H1 (cell line): ENCODE measurements at regions of chr16 and their contacts with region 1.

Region 1: DNA sequence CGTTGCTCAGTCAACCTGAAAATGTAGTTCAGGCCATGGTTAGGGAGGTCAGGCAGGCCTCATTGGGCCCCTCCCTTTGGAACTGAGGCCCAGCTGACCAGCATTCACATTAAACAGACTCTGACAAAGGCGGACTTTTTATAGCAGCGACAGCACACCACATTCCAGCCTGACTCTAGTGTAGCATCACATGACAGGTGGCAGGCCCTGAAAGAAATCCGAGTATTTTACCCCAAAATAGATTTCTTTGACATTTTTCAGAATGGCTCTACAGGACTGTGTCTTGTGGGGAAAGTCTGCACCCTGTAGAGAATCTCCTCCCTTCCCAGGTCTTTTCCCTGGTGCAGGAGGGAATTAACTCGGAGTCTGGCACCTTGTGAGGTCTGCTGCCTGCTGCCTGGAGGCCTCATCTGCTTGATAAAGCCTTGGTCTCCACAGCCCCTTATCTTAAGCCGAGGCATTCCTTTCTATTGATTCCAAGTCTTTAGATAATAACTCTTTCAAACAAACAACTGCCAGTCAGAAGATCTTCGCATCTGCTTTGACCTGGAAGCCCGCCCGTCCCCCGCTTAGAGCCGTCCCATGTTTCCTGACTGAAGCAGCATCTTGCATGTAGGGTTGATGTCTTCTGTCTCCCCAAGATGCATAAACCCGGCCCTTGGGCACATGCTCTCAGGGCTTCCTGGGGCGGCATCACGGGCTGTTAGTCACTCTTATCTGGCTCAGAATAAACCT is 44.0 kb upstream of the CAPN15 start:
- DNase-seq: no peak
- H3K4me3 ChIP-seq: no peak overlapping the region
- H3K27ac ChIP-seq: peak overlapping the region; percentile 66
- H3K4me1 ChIP-seq: peaks cover 10 to 16% (median 12%) of the 10 kb centered on the region in 4 experiments
- H3K27me3 ChIP-seq: no peaks in the 10 kb centered on the region
- CTCF ChIP-seq: no peak
- EP300 ChIP-seq: no peak
- POLR2A ChIP-seq: no peak
- RAD21 ChIP-seq: no peak

Region 2: GRCh38 chr16:391885-392335 is 91.6 kb before region 1 on chr16:
- CTCF ChIA-PET with region 1: interaction called, 37 read pairs
- POLR2A ChIA-PET with region 1: interaction called, 4 read pairs
- DNase-seq: peak; percentile 83 to 97
- H3K4me3 ChIP-seq: no peak overlapping the region
- H3K27ac ChIP-seq: no peak overlapping the region
- H3K4me1 ChIP-seq: peaks cover 0 to 7% (median 2%) of the 10 kb centered on the region in 4 experiments; a peak in 3 of 7 replicates
- H3K27me3 ChIP-seq: no peaks in the 10 kb centered on the region
- CTCF ChIP-seq: peak; percentile 94 to 100 (median 99)
- EP300 ChIP-seq: no peak
- POLR2A ChIP-seq: no peak
- RAD21 ChIP-seq: peak; percentile 99

Region 3: GRCh38 chr16:401468-402348 is 81.8 kb before region 1 on chr16 and contains the start of gene DECR2:
- CTCF ChIA-PET with region 1: interaction called, 11 read pairs
- POLR2A ChIA-PET with region 1: interaction called, 3 read pairs
- DNase-seq: peak; percentile 68 to 98
- H3K4me3 ChIP-seq: peak within 1 kb of the TSS; percentile 61 to 71 (median 68)
- H3K27ac ChIP-seq: peak within 1 kb of the TSS; percentile 63; the same call in 1 of the 2 replicates
- H3K4me1 ChIP-seq: peaks cover 0 to 20% (median 11%) of the 10 kb centered on the region in 4 experiments; a peak in 6 of 7 replicates
- H3K27me3 ChIP-seq: no peaks in the 10 kb centered on the region
- CTCF ChIP-seq: peak; percentile 9 to 25 (median 12); a peak in 3 of 4 replicates
- EP300 ChIP-seq: no peak
- POLR2A ChIP-seq: peak; percentile 69 to 87
- RAD21 ChIP-seq: peak; percentile 24 to 28; a peak in 3 of 4 replicates
- total RNA-seq, gene DECR2: 28.2 and 30.6 TPM in 2 replicates

Region 4: GRCh38 chr16:424033-424622 is 59.4 kb before region 1 on chr16:
- CTCF ChIA-PET with region 1: interaction called, 12 read pairs
- POLR2A ChIA-PET with region 1: interaction called, 3 read pairs
- DNase-seq: no peak
- H3K4me3 ChIP-seq: peak overlapping the region in 1 of 4 experiments; percentile 74; a peak in 2 of 8 replicates
- H3K27ac ChIP-seq: no peak overlapping the region
- H3K4me1 ChIP-seq: peaks cover 0 to 15% (median 7%) of the 10 kb centered on the region in 4 experiments; a peak in 4 of 7 replicates
- H3K27me3 ChIP-seq: peaks cover 11 to 33% (median 24%) of the 10 kb centered on the region in 4 experiments
- CTCF ChIP-seq: no peak
- EP300 ChIP-seq: no peak
- POLR2A ChIP-seq: no peak
- RAD21 ChIP-seq: no peak

Region 5: DNA sequence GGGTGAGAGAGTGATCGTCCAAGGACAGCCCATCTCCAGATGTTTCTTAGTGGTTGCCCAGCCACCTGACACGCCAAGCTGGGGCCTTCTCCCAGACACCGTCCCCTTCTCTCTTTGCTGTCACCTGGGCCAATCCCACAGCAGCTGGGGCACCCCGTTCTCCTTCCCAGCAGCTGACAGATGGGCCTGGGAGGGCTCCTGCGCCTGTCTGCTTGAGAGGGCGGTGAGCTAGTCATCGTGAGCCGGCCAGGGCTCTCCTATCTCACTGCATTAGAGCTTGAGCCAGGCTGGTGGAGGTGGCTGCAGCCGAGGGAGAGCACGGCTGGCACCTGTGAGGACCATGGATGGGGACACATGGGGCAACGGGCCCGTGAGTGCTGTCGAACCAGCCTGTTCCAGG is 16.9 kb before region 1 on chr16:
- CTCF ChIA-PET with region 1: interaction called, 13 read pairs
- POLR2A ChIA-PET with region 1: no interaction called
- DNase-seq: no peak
- H3K4me3 ChIP-seq: no peak overlapping the region
- H3K27ac ChIP-seq: no peak overlapping the region
- H3K4me1 ChIP-seq: peaks cover 3 to 11% (median 7%) of the 10 kb centered on the region in 4 experiments
- H3K27me3 ChIP-seq: no peaks in the 10 kb centered on the region
- CTCF ChIP-seq: no peak
- EP300 ChIP-seq: no peak
- POLR2A ChIP-seq: no peak
- RAD21 ChIP-seq: no peak

Region 6: GRCh38 chr16:495127-495748 is 11.7 kb after region 1 on chr16:
- CTCF ChIA-PET with region 1: interaction called, 19 read pairs
- POLR2A ChIA-PET with region 1: interaction called, 4 read pairs
- DNase-seq: peak; percentile 41 to 80
- H3K4me3 ChIP-seq: no peak overlapping the region
- H3K27ac ChIP-seq: no peak overlapping the region
- H3K4me1 ChIP-seq: peaks cover 6 to 9% (median 7%) of the 10 kb centered on the region in 4 experiments
- H3K27me3 ChIP-seq: no peaks in the 10 kb centered on the region
- CTCF ChIP-seq: peak; percentile 70 to 78 (median 74)
- EP300 ChIP-seq: no peak
- POLR2A ChIP-seq: no peak
- RAD21 ChIP-seq: peak; percentile 62 to 67

Region 7: DNA sequence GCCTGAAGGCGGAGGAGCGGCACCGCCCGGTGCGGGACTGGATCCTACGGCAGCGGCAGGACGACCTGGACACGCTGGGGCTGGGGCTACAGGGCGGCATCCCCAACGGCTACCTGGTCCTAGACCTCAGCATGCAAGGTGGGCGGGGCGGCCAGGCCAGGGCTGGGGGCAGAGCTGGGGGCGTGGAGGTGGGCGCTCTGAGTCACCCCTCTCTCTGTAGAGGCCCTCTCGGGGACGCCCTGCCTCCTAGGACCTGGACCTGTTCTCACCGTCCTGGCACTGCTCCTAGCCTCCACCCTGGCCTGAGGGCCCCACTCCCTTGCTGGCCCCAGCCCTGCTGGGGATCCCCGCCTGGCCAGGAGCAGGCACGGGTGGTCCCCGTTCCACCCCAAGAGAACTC is 284.9 kb after region 1 on chr16:
- CTCF ChIA-PET with region 1: no interaction called
- POLR2A ChIA-PET with region 1: no interaction called
- DNase-seq: no peak
- H3K4me3 ChIP-seq: no peak overlapping the region
- H3K27ac ChIP-seq: no peak overlapping the region; the same call in 1 of the 2 replicates
- H3K4me1 ChIP-seq: peaks cover 0 to 8% (median 6%) of the 10 kb centered on the region in 4 experiments; a peak in 5 of 7 replicates
- H3K27me3 ChIP-seq: no peaks in the 10 kb centered on the region
- CTCF ChIP-seq: no peak
- EP300 ChIP-seq: no peak
- POLR2A ChIP-seq: no peak
- RAD21 ChIP-seq: no peak